Posterior vena cava (tissue), 2 donors: ENCODE measurements at regions of chr20 and their contacts with region 1.

Region 1: DNA sequence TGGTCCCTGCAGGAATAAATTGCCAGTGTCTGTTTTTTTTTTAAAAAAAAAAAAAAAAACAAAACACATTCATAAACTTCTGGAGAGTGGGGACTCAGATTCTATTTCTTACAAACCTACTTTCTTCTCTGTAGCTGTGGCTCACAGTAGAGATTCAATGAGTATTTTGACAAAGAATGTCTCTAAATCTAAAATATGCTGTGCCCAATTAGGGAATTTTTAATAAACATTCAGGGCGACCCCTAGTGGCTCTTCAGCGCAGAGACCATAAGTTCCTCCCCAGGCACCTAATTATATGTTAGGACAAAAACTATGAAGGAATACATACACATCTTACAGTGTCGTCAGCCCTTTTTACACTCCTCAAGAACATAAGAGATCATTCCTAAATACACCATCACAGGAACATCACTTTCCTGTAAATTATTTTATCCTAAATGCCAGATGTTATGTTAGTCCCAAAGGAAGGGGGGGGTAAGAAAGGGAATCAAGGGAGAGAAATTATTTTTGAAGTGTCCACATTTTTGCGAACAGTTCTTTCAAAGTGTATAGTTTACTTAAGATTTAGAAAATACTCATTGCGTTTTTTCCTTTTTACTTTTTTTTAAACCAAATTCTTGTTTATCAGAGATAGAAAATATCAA is 21.8 kb upstream of the NAA20 start:
- DNase-seq: no peak

Region 2: GRCh38 chr20:19692685-19693119 is 302.6 kb before region 1 on chr20:
- intact Hi-C with region 1: loop called in 1 of 2 experiments (anchors 10 kb)
- DNase-seq: peak; percentile 90

Region 3: DNA sequence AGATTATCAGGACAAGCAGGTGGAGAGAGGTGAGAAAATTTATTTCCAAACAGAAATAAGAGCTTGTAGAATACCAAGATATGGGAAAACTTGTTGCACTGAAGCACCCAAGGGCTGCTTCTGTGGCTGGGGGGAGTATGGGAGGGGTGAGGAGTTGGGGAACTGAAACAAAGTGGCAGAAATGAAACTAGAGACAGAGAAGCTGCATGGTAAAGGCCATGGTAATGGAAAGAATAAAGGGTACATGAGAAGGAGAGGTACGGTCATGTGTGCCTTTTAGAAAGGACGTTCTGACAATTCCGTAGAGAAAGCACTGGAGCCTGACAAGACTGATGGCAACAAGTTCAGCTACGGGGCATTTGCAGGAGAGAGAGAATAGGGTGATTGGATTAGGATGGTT is 288.9 kb before region 1 on chr20:
- intact Hi-C with region 1: no loop called
- DNase-seq: no peak

Region 4: DNA sequence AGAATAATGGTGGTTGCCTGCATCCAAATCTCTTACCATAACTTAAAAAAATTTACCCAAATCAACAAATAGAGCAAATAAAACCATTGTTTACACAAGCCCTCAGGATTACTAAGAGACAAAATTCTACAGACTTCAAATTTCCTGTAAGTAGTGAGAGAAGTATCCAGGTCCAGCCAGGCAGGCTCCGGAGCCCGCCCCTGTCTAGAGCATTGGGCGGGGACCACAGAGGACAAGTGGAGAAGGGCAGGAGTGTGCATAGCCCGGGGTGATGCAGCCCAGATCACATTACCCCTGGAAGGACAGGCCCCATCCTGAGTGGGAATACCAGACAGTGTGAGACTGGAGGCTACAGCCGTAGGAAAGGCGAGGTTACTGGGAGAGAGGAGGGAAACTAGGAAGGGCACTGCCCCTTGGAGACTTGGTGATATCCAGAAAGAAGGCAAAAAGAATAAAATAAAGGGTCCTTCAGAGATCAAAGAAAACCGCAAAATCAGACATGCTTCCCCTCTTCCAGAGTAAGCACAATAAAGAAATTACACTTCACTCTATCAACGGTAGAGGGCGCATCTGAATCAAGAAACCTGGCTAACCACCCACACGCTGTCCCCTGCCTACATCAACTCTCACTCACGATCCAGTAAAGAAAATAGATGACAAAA is 210.7 kb before region 1 on chr20:
- intact Hi-C with region 1: loop called (anchors 5 kb)
- DNase-seq: no peak

Region 5: GRCh38 chr20:19974626-19975435 is 20.5 kb before region 1 on chr20:
- intact Hi-C with region 1: loop called in 1 of 2 experiments (anchors 2 kb)
- DNase-seq: peak; percentile 94

Region 6: GRCh38 chr20:19981031-19981451 is 14.3 kb before region 1 on chr20:
- intact Hi-C with region 1: loop called in 1 of 2 experiments (anchors 2 kb)
- DNase-seq: no peak

Region 7: GRCh38 chr20:20037960-20038359 is 42.6 kb after region 1 on chr20:
- intact Hi-C with region 1: no loop called
- DNase-seq: no peak